H1 (cell line): ENCODE measurements at regions of chr11 and their contacts with region 1.

Region 1: DNA sequence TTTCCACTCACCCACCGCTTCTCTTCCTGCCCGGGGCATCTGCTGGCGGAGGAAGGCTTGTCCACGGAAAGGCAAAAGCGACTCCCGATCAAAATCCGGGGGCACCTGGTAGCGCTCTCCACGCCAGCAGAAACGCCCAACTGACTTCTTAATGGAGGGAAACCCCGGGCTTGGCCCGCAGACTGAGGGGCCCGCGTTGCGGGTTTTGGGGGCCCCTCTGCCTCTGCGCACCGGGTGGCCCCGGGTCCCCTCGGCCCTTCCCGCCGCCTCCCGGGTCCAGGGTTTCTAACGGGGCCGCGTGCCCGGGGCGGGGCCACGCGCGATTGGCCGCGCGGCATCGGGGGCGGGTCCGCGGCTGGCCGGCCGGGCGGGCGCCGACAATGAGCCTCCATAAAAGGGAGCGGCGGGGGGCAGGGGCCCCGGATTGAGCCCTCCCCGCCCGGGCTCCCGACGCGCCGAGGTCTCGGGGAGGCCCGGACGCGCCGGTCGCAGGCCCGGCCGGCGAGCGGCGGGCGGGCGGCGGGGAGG is at the start of gene SPINDOC:
- DNase-seq: peak in 1 of 2 experiments; percentile 88
- H3K4me3 ChIP-seq: peak within 1 kb of the TSS; percentile 79 to 91 (median 90)
- H3K27ac ChIP-seq: peak within 1 kb of the TSS; percentile 92
- H3K4me1 ChIP-seq: peaks cover 4 to 20% (median 12%) of the 10 kb centered on the region in 4 experiments; a peak in 6 of 7 replicates
- H3K27me3 ChIP-seq: no peaks in the 10 kb centered on the region; a peak in 1 of 7 replicates
- CTCF ChIP-seq: no peak
- EP300 ChIP-seq: no peak
- POLR2A ChIP-seq: no peak
- RAD21 ChIP-seq: no peak
- total RNA-seq, gene SPINDOC: 99.7 and 104 TPM in 2 replicates

Region 2: DNA sequence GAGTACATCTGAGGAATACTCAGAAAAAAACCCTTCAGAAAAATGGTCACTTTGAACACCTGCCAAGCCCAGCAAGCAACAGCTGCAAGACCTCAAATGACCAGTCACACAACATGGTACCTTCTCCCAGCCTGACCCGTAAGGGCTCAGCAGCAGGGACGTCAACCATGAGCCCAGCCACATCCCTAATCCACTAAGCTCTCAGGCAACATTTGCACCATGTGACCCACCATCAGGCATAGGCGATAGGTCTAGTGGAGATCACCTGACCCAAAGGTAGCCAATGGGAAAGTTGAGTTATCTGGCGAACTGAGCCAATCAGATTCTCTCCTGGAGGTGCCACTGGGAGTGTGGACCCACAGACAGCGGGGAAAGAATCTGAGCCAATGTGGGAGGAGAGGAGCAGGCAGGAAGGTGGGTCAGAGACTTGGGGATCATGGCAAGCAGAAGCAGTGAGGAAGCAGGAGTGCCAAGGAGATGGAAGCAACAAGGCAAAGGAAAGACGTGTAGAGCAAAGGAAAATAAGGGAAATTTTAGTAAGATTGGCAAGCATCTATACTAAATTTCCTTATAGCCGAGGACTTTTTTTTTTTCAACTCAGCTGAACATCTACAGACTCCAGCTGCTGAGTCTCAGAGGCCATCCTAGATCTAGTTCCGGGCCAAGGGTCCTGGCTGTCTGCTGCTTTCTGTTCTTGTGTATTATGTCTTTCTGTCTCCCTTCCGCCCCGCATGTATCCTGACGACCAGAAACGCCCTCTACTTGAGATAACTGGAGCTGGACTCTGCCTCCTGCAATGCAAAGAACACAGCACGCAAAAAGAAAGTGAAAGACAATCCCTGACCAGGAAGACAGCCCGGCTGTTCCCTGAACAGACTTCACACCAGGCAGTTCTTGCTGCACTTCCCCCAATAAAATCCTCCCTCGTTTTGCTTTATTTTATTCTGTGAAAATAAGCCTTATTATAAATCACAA is 238.9 kb before region 1 on chr11:
- CTCF ChIA-PET with region 1: no interaction called
- POLR2A ChIA-PET with region 1: no interaction called
- DNase-seq: no peak
- H3K4me3 ChIP-seq: no peak overlapping the region
- H3K27ac ChIP-seq: no peak overlapping the region
- H3K4me1 ChIP-seq: no peaks in the 10 kb centered on the region
- H3K27me3 ChIP-seq: no peaks in the 10 kb centered on the region
- CTCF ChIP-seq: no peak
- EP300 ChIP-seq: no peak
- POLR2A ChIP-seq: no peak
- RAD21 ChIP-seq: no peak

Region 3: GRCh38 chr11:63802637-63803414 is 10.3 kb before region 1 on chr11:
- CTCF ChIA-PET with region 1: no interaction called
- POLR2A ChIA-PET with region 1: interaction called, 12 read pairs
- DNase-seq: no peak
- H3K4me3 ChIP-seq: no peak overlapping the region
- H3K27ac ChIP-seq: no peak overlapping the region
- H3K4me1 ChIP-seq: no peaks in the 10 kb centered on the region
- H3K27me3 ChIP-seq: no peaks in the 10 kb centered on the region
- CTCF ChIP-seq: no peak
- EP300 ChIP-seq: no peak
- POLR2A ChIP-seq: no peak
- RAD21 ChIP-seq: no peak

Region 4: DNA sequence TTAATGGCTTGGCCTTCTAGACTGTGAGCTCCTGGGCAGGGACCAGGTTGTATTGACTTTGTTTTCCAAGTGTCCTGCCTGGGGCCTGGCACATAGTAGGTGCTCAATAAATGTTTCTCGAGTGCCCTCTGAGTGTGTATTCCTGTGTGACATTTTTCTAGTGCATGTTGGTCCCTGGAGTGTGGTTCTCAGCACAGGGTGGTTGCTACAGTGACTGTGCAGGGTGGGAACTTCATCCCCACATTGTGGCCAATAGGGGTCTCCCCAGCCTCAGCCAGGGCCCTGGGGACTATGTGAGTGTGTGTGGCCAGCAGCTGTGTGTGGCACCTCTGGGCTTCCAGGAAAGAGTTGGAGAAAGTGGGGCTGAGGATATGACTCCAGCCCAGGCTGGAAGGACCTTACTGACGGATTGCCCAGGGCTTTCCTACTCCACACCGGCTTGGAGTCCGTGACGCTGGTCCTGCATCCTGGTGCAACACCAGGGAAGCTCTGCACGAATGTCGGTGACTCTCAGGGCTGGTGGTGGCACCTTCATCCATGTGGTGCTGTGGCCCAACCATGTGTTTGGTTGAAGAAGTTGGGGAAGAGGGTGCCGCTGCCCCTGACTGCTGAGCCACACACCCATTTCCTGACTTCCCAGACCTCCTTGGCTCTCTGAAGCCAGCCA is 16.9 kb after region 1 on chr11:
- CTCF ChIA-PET with region 1: interaction called, 5 read pairs
- POLR2A ChIA-PET with region 1: interaction called, 85 read pairs
- DNase-seq: peak in 1 of 2 experiments; percentile 65
- H3K4me3 ChIP-seq: no peak overlapping the region
- H3K27ac ChIP-seq: no peak overlapping the region
- H3K4me1 ChIP-seq: peaks cover 3 to 12% (median 8%) of the 10 kb centered on the region in 4 experiments
- H3K27me3 ChIP-seq: no peaks in the 10 kb centered on the region
- CTCF ChIP-seq: peak; percentile 69 to 85 (median 80)
- EP300 ChIP-seq: no peak
- POLR2A ChIP-seq: no peak
- RAD21 ChIP-seq: peak; percentile 76 to 84